ENCODE measurements at regions of chr1 and their contacts with region 1.

Region 1: GRCh38 chr1:235883261-235883927 is 16.7 kb upstream of the LYST start:
- DNase-seq: no peak
- H3K4me3 ChIP-seq: peak overlapping the region in 1 of 8 donors; percentile 27
- H3K27ac ChIP-seq: peak overlapping the region in 7 of 8 donors; percentile 3 to 67 (median 52)
- H3K4me1 ChIP-seq: peaks cover 15 to 90% (median 44%) of the 10 kb centered on the region in 6 donors
- H3K27me3 ChIP-seq: no peaks in the 10 kb centered on the region
- CTCF ChIP-seq: no peak
- POLR2A ChIP-seq: no peak

Region 2: DNA sequence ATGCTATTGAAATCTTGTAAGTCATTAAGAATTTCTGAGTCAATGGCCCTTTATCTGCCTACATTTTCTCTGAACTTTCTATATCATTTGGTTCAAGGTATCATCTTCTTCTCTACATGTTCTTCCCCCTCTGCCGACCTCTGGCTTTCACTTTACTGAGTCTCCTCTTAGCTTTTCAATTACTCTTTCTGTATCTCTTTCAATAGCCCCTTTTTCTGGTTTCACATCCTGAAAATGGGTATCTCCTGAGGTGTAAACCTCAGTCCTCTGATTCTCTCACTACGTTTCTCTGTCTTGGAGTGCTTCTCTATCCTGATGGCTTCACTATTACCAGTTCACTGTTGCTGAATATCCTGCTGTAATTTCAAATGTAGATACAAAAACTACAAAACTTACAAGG is 115.6 kb before region 1 on chr1:
- intact Hi-C with region 1: no loop called
- DNase-seq: no peak
- H3K4me3 ChIP-seq: no peak overlapping the region
- H3K27ac ChIP-seq: no peak overlapping the region
- H3K4me1 ChIP-seq: peaks cover 0 to 21% (median 0%) of the 10 kb centered on the region in 6 donors
- H3K27me3 ChIP-seq: no peaks in the 10 kb centered on the region
- CTCF ChIP-seq: no peak
- POLR2A ChIP-seq: no peak

Region 3: DNA sequence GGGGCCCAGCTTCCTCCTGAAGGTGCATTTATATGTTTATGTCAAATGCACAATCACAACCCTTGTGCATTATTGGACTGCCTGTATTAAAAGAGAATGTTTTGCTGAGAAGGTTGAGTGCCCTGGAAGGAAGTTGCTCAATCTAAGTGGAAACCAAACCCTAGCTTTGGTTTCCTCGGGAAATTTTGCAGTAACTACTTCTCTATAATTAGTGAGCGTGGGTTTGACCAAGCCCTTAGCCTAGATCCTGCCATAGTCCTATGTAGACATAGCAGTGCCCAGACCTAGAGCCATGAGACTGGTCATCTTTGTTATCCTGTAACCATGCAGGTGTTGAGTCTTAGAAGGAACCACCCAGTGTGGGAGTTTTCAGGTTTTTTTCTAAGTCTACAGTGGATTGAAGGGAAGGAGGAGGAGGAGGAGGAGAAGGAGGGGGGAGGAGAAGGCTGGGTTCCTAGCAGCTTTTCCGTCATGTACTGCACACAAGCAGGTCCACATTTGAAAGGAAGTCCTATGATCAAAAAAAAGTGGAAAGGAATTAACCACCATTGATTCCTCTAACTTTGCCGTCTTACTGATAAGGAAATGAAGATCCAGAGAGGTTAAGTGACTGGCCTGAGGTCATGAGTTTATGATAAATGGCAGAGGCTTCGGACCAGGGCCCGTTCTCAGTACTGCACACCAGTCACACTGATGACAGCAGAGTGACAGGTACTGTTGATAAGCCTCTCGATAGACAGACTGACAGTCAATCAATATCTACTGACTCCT is 55.5 kb after region 1 on chr1:
- intact Hi-C with region 1: loop called (anchors 10 kb)
- DNase-seq: no peak
- H3K4me3 ChIP-seq: peak overlapping the region in 1 of 8 donors; percentile 27
- H3K27ac ChIP-seq: peak overlapping the region; percentile 62 to 93 (median 84)
- H3K4me1 ChIP-seq: peaks cover 28 to 99% (median 85%) of the 10 kb centered on the region in 6 donors
- H3K27me3 ChIP-seq: no peaks in the 10 kb centered on the region
- CTCF ChIP-seq: no peak
- POLR2A ChIP-seq: no peak

Measured in spleen (tissue), 13 donors.